Naive thymus-derived CD4-positive, alpha-beta T cell (primary cell): ENCODE measurements at regions of chr7 and their contacts with region 1.

Region 1: GRCh38 chr7:149497456-149498261 is at the start of gene ZNF746:
- DNase-seq: peak; percentile 57 to 85 (median 76)
- ATAC-seq: peak; percentile 96
- H3K4me3 ChIP-seq: peak within 1 kb of the TSS; percentile 67
- H3K4me3 Mint-ChIP-seq: peak within 1 kb of the TSS; percentile 92 to 99 (median 96)
- H3K27ac ChIP-seq: peak within 1 kb of the TSS; percentile 82
- H3K27ac Mint-ChIP-seq: peak within 1 kb of the TSS; percentile 84 to 97 (median 95)
- H3K4me1 ChIP-seq: peaks cover 19 to 27% of the 10 kb centered on the region in 2 donors
- H3K4me1 Mint-ChIP-seq: peaks cover 21 to 46% (median 30%) of the 10 kb centered on the region in 7 donors
- H3K27me3 ChIP-seq: no peaks in the 10 kb centered on the region
- H3K27me3 Mint-ChIP-seq: peaks cover 0 to 3% (median 0%) of the 10 kb centered on the region in 5 donors
- total RNA-seq, gene ZNF746: 23.6 to 32.0 (median 24.4) TPM

Region 2: DNA sequence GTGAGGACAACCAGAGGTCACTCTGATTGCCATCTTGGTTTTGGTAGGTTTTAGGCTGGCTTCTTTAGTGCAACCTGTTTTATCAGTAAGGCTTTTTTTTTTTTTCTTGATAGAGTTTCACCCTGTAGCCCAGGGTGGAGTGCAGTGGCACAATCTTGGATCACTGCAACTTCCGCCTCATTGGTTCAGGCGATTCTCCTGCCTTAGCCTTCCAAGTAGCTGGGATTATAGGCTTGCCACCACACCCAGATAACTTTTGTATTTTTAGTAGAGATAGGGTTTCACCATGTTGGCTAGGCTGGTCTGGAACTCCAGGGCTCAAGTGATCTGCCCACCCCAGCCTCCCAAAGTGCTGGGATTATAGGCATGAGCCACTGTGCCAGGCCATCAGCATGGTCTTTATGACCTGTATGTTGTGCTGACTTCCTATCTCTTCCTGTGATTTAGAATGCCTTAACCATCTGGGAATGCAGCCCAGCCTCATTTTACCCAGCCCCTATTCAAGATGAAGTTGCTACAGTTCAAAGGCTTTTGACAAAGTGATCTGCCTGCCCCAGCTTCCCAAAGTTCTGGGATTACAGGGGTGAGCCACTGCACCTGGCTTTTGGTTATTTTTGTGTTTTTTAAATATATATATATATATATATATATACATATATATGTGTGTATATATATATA is 364.5 kb before region 1 on chr7:
- CTCF ChIA-PET with region 1: no interaction called
- POLR2A ChIA-PET with region 1: no interaction called
- intact Hi-C with region 1: no loop called
- DNase-seq: no peak
- ATAC-seq: no peak
- H3K4me3 ChIP-seq: no peak overlapping the region
- H3K4me3 Mint-ChIP-seq: no peak overlapping the region
- H3K27ac ChIP-seq: no peak overlapping the region
- H3K27ac Mint-ChIP-seq: no peak overlapping the region
- H3K4me1 ChIP-seq: no peaks in the 10 kb centered on the region
- H3K4me1 Mint-ChIP-seq: peaks cover 0 to 4% (median 2%) of the 10 kb centered on the region in 7 donors
- H3K27me3 ChIP-seq: no peaks in the 10 kb centered on the region
- H3K27me3 Mint-ChIP-seq: no peaks in the 10 kb centered on the region

Region 3: GRCh38 chr7:149195180-149196150 is 302.2 kb before region 1 on chr7 and contains the start of gene ZNF282:
- CTCF ChIA-PET with region 1: no interaction called
- POLR2A ChIA-PET with region 1: no interaction called
- intact Hi-C with region 1: loop called (anchors 5 to 10 kb)
- DNase-seq: peak; percentile 43 to 84 (median 56)
- ATAC-seq: peak; percentile 91
- H3K4me3 ChIP-seq: peak within 1 kb of the TSS; percentile 82
- H3K4me3 Mint-ChIP-seq: peak within 1 kb of the TSS; percentile 83 to 94 (median 90)
- H3K27ac ChIP-seq: peak within 1 kb of the TSS; percentile 77
- H3K27ac Mint-ChIP-seq: peak within 1 kb of the TSS; percentile 79 to 97 (median 86)
- H3K4me1 ChIP-seq: peaks cover 6 to 8% of the 10 kb centered on the region in 2 donors
- H3K4me1 Mint-ChIP-seq: peaks cover 20 to 52% (median 47%) of the 10 kb centered on the region in 7 donors
- H3K27me3 ChIP-seq: no peaks in the 10 kb centered on the region
- H3K27me3 Mint-ChIP-seq: peaks cover 0 to 3% (median 0%) of the 10 kb centered on the region in 5 donors
- total RNA-seq, gene ZNF282: 12.1 to 36.7 (median 15.1) TPM

Region 4: DNA sequence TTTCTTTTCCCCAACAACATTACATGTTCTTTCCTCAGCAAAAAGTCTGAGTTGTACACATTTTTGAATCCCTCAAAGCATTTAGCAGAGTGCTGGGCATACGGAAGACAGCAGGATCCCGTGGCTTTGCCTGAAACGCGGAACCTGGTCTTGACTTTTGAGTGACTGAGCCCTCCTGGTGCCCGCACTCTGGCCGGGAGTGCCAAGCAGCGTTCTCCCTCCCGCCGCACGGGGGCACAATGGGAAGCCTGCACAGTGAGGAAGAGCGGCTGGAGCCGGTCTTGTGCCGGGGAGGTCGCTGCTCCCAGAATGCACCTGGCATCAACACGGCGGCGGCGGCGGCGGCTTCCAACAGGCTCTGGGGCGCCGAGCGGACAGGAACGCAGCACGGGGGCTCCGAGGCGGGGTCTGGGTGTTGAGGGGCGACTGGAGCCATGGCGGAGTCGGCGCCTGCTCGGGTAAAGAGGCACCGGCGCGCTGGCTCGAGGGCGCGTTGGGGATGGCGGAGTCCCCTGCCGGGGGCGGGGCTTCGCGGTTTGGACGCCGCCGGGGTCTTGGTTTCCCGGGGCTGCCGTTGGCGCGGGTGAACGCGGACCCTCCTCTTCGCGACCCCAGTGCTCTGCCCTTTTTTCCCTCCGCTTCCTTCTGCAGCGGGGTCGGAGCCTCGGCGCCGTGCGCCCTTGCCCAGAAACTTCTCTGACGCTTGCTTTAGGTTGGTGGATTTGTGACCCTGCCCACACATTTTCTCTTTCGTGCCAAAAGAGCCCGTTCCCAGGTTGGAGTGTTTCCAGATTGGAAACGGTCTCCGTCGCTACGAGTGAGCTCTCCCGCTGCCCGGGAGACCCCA is 258.1 kb before region 1 on chr7 and contains the start of gene ZNF212:
- CTCF ChIA-PET with region 1: no interaction called
- POLR2A ChIA-PET with region 1: interaction called, 3 read pairs
- intact Hi-C with region 1: loop called (anchors 1 kb)
- DNase-seq: peak; percentile 75 to 89 (median 84)
- ATAC-seq: peak; percentile 100
- H3K4me3 ChIP-seq: peak within 1 kb of the TSS; percentile 90
- H3K4me3 Mint-ChIP-seq: peak within 1 kb of the TSS; percentile 85 to 95 (median 92)
- H3K27ac ChIP-seq: peak within 1 kb of the TSS; percentile 76
- H3K27ac Mint-ChIP-seq: peak within 1 kb of the TSS; percentile 71 to 89 (median 87)
- H3K4me1 ChIP-seq: peaks cover 14 to 16% of the 10 kb centered on the region in 2 donors
- H3K4me1 Mint-ChIP-seq: peaks cover 23 to 43% (median 33%) of the 10 kb centered on the region in 7 donors
- H3K27me3 ChIP-seq: no peaks in the 10 kb centered on the region
- H3K27me3 Mint-ChIP-seq: peaks cover 0 to 6% (median 0%) of the 10 kb centered on the region in 5 donors
- total RNA-seq, gene ZNF212: 10.4 to 20.6 (median 13.3) TPM

Region 5: GRCh38 chr7:149310113-149310836 is 187.4 kb before region 1 on chr7:
- CTCF ChIA-PET with region 1: no interaction called
- POLR2A ChIA-PET with region 1: no interaction called
- intact Hi-C with region 1: loop called in 1 of 2 experiments (anchors 1 kb)
- DNase-seq: peak in 3 of 9 donors; percentile 11 to 30 (median 26)
- ATAC-seq: peak; percentile 65
- H3K4me3 ChIP-seq: no peak overlapping the region
- H3K4me3 Mint-ChIP-seq: peak overlapping the region in 1 of 10 donors; percentile 0
- H3K27ac ChIP-seq: no peak overlapping the region
- H3K27ac Mint-ChIP-seq: peak overlapping the region in 5 of 9 donors; percentile 2 to 42 (median 9)
- H3K4me1 ChIP-seq: no peaks in the 10 kb centered on the region
- H3K4me1 Mint-ChIP-seq: peaks cover 0 to 6% (median 5%) of the 10 kb centered on the region in 7 donors
- H3K27me3 ChIP-seq: no peaks in the 10 kb centered on the region
- H3K27me3 Mint-ChIP-seq: peaks cover 0 to 12% (median 0%) of the 10 kb centered on the region in 5 donors

Region 6: DNA sequence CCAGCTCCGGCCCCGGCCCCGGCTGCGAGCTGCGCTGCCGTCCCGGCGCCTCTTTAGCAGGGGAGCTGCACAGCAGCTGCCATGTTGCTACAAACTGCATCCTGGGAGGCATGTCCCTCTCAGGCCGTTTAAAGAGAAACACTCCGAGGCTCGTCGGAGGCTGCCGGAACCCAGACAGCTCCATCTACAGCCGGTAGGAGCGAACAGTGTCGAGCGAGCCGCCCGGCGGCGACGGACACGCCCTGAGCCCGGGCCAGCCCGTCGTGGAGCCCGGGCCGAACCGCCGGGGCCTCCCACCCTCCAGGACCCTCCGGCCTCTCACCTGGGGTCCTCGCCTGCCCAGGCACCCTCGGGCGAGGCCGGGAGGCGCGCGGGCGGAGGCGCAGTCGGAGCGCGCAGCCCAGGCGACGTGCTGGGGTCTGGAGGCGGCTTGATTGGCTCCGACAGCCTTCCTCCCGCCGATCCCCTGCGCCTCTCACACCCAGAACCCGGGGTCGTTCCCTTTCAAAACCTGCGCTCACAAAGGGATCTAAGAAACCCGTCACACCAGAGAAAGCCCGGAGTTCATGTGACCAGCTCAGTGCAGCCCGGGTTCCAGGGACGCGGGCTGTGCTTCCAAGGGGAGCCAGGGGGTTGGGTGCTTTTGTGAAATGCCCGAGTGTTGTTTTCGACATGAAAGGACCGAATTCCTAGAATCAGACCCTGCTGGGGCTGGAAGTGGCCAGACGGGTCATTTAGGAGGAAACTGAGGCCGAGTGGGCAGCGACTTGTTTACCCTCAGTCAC is 37.0 kb before region 1 on chr7 and contains the start of gene ZNF777:
- CTCF ChIA-PET with region 1: interaction called, 3 read pairs
- POLR2A ChIA-PET with region 1: interaction called, 5 read pairs
- intact Hi-C with region 1: loop called (anchors 1 kb)
- DNase-seq: peak; percentile 65 to 84 (median 80)
- ATAC-seq: peak; percentile 99
- H3K4me3 ChIP-seq: peak within 1 kb of the TSS; percentile 80
- H3K4me3 Mint-ChIP-seq: peak within 1 kb of the TSS; percentile 78 to 91 (median 87)
- H3K27ac ChIP-seq: peak within 1 kb of the TSS; percentile 72
- H3K27ac Mint-ChIP-seq: peak within 1 kb of the TSS; percentile 28 to 89 (median 76)
- H3K4me1 ChIP-seq: peaks cover 4 to 16% of the 10 kb centered on the region in 2 donors
- H3K4me1 Mint-ChIP-seq: peaks cover 13 to 46% (median 35%) of the 10 kb centered on the region in 7 donors
- H3K27me3 ChIP-seq: no peaks in the 10 kb centered on the region
- H3K27me3 Mint-ChIP-seq: peaks cover 4 to 29% (median 10%) of the 10 kb centered on the region in 5 donors
- total RNA-seq, gene ZNF777: 11.2 to 16.1 (median 14.3) TPM

Region 7: DNA sequence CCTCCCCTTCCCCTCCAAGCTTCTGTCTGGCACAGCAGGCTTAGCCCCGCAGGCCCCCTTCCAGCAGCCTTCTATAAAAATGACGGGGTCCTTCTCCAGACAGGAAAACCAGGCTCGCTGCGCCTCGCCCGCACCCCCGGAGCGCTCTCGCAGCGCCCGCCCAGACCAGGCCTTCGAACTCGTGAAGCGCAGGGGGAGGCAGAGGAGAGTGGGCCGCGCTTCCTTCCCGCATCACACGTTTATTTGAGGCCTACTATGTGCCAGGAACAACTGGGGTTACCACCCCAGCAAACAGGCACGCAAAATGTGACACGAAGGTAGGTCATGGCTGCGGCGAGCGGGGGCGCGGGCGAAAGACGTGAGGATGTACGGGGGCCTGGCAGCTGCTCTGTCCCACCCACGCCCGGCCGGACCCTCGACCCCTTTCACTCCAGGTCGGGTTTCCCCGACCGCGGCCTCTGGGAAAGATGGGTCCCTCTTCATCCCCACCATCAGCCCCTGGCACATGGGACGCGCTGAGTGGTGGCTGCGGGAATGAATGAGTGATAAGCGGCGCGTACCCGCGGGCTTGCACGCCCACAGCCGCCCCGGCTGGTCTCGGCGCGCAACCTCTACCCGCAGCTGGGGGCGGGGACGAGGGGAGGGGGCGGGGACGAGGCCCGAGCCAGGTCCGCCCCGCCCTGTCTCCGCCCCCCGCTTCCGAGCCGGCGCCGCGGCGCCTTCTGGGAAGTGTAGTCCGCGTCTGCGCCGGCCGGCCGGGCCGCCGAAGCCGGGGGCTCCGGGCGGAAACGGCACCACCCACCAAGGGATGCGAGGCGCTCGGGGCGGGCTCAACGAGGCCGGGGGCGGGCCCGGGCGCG is 216.6 kb after region 1 on chr7:
- CTCF ChIA-PET with region 1: no interaction called
- POLR2A ChIA-PET with region 1: no interaction called
- intact Hi-C with region 1: loop called in 1 of 2 experiments (anchors 1 kb)
- DNase-seq: peak; percentile 68 to 89 (median 84)
- ATAC-seq: peak; percentile 99
- H3K4me3 ChIP-seq: peak overlapping the region; percentile 75
- H3K4me3 Mint-ChIP-seq: peak overlapping the region; percentile 71 to 87 (median 80)
- H3K27ac ChIP-seq: peak overlapping the region; percentile 72
- H3K27ac Mint-ChIP-seq: peak overlapping the region in 4 of 9 donors; percentile 5 to 72 (median 54)
- H3K4me1 ChIP-seq: peaks cover 10 to 13% of the 10 kb centered on the region in 2 donors
- H3K4me1 Mint-ChIP-seq: peaks cover 12 to 26% (median 19%) of the 10 kb centered on the region in 7 donors
- H3K27me3 ChIP-seq: no peaks in the 10 kb centered on the region
- H3K27me3 Mint-ChIP-seq: peaks cover 0 to 4% (median 0%) of the 10 kb centered on the region in 5 donors